ENCODE measurements at regions of chr17 and their contacts with region 1.

Region 1: GRCh38 chr17:57747221-57748017 is 2.3 kb upstream of the CCDC182 start:
- DNase-seq: no peak
- ATAC-seq: peak; percentile 65

Region 2: DNA sequence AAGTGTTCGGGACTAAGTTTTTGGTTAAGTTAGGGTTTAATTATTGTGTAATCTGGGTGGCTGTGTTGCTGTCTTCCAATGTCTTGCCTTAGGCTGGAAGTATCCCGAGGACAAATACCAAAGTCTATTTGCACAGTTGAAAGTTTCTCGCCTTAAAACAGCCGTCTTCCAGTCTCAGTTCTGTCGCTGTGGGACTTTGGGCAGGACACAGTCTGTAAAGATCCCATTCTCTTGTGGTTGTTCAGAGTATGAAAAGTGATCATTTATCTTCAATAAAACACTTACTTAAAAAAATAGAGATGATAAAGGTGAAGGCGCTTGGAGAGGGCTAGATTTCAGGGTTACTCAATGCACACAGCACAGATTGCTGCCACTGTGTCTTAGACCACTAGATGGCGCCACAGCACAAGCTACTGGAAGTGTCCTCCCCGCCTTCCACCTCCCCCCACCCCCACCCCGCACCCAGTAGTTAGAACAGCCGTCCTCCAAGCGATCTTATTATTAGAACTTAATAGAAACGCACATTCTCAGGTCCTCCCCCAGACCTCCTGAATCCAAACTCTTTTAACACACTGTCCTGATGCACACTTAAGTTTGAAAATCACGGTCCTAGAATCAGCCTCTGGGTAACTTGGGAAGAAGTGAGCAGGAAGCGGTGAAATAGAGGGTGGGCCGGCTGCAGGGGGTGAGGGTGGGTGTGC is 616.5 kb before region 1 on chr17:
- intact Hi-C with region 1: loop called (anchors 5 kb)
- DNase-seq: peak; percentile 86
- ATAC-seq: peak; percentile 96

Region 3: GRCh38 chr17:57243171-57243948 is 504.1 kb before region 1 on chr17:
- intact Hi-C with region 1: loop called (anchors 10 kb)
- DNase-seq: peak; percentile 74
- ATAC-seq: peak; percentile 87

Region 4: DNA sequence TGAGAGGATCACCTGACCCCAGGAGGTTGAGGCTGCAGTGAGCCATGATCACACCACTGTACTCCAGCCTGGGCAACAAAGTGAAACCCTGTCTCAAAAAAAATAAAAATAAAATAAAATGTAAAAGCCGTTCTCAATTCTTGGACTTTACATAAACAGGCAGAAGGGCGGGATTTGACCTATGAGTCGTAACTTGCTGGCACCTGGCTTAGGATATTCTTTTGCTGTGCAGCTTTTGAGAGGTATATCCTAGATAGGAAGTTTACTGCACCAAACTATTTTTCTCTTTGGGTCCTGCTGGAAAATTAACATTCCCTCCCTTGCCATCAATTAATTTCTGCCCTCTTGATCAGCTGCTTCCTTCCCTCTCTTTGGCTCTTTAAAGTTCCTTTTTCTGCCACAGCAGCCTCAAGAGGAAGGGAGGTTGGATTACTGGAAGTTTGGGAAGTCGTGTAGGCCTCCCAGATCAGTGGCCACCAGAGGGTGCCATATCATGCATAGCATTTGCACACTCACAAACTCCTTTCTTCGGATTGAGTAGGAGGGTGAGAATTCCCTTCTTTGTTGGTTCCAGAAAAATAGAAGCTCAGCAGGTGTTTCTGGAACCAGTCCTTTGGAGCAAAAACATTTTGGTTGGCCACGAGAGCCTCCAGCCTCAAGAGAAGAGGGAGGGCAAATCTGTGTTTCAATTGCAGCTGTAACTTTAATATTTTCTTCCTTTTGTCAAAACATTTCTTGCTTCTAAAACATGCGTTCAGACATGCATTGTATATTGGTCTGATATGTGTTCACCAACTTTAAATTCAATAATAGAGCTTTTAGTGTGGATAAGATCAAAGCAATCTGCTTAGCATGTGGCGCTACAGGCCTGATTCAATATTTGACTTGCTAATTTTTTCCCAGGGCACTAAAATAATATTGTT is 149.6 kb before region 1 on chr17:
- intact Hi-C with region 1: loop called (anchors 10 kb)
- DNase-seq: peak; percentile 76
- ATAC-seq: peak; percentile 82